ENCODE measurements at regions of chr5 and their contacts with region 1.

Region 1: DNA sequence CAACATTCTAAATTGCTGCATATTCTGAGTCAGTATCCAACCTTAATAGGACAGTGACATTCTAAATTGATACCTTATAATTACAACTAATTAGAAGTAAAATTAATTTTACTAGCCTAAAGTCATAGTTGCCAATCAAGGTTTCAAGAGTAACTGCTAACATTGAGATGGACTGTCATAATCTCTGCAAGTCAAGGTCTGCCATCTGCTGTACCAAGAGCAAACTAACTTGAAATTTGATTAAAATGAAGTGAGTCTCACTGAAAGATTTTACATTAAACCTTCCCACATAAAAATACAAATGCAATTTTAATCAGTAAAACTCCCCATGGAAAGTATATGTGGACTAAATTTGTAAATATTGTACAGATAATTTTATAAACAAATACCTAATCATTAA is 235.3 kb downstream of the PRDM9 start:
- DNase-seq: no peak
- ATAC-seq: no peak

Region 2: DNA sequence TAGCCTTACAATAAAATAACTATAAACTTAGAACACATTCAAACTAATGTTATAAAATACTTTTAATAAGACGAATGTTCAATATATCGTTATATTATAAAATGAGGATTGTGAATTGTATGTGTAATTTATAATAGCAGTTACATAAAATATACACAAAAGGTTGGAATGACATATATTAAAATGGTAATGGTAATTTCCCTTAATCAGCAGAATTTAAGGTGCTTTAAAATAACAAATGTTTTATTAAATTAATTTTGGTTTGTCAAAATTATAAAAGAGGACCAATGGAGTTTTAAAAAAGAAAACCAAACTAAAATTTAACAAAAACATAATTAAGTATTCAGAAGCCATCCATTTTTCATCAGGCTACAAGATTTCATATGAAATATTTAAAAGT is 399.6 kb before region 1 on chr5:
- intact Hi-C with region 1: loop called in 1 of 2 experiments (anchors 5 kb)
- DNase-seq: no peak
- ATAC-seq: no peak

Region 3: GRCh38 chr5:23352437-23352836 is 390.3 kb before region 1 on chr5:
- intact Hi-C with region 1: loop called in 1 of 2 experiments (anchors 2 kb)
- DNase-seq: no peak
- ATAC-seq: peak in 1 of 2 donors; percentile 47

Region 4: GRCh38 chr5:23675456-23675855 is 67.2 kb before region 1 on chr5:
- intact Hi-C with region 1: no loop called
- DNase-seq: no peak
- ATAC-seq: peak in 1 of 2 donors; percentile 12

Region 5: DNA sequence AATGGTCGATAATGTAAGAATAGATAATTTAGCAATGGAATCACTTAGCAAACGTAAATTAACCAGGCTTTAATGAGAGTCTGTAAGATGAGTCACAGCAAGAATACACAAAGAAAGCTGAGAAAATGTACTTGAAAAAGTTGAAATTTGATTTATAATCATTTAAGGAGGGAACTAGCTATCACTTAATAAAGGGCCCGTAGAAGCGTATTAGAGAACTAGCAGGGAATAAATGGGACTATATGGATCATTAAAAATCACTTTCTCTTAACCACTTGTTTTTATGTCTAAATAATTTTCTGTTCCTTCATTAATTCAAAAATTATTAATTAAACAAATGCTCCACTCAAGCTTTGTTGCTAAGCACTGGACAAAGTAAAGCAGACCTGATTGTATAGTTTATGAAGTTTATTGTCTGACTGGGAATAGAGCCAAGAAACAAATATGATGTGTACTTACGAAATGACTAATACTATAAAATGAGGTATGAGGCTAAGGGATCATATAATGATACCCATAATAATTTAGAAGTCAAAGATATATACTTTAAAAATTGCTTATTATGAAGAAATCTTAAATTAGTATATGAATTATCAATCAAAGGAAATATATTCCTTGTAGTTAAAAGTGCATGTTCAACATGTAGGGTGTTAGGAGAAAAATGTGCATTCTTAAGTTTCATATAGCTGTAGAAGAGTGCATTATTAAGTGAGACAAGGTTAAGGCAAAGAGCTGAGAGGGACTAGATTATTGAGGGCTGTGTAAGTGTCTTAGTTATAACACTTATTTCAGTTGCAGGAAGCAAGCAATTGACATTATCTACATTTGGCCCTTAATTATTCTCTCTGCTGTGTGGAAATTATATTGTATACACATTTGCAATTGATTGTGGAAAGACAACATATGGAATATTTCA is 38.5 kb before region 1 on chr5:
- intact Hi-C with region 1: no loop called
- DNase-seq: no peak
- ATAC-seq: no peak

Region 6: DNA sequence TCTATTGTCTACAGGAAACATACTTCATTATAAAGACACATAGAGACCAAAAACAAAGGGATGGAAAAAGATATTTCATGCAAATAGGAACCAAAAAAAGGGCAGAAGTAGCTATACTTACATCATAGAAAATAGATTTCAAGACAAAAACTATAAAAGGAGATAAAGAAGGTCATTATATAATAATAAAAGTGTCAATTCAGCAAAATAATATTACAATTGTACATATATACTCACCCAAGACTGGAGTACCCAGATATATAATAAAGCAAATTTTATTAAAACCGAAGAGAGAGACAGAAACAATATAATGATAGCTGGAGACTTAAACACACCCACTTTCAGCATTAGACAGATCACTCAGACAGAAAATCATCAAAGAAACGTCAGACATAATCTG is 311.0 kb after region 1 on chr5:
- intact Hi-C with region 1: no loop called
- DNase-seq: no peak
- ATAC-seq: no peak

Region 7: DNA sequence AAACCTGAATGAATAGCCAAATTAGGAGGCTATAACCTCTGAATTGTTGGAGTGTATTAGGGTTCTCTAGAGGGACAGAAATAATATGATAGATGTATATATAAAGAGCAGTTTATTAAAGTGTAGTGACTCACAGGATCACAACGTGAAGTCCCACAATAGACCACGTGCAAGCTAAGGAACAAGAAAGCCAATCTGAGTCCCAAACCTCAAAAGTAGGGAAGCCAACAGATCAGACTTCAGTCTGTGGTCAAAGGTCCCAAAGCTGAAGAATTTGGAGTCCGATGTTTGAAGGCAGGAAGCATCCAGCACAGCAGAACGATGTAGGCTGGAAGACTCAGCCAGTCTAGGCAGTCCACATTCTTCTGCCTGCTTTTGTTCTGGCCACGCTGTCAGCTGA is 351.4 kb after region 1 on chr5:
- intact Hi-C with region 1: no loop called
- DNase-seq: no peak
- ATAC-seq: no peak

Measured in left cardiac atrium (tissue), 4 donors.